Ovary (tissue), 10 donors: ENCODE measurements at regions of chr20 and their contacts with region 1.

Region 1: DNA sequence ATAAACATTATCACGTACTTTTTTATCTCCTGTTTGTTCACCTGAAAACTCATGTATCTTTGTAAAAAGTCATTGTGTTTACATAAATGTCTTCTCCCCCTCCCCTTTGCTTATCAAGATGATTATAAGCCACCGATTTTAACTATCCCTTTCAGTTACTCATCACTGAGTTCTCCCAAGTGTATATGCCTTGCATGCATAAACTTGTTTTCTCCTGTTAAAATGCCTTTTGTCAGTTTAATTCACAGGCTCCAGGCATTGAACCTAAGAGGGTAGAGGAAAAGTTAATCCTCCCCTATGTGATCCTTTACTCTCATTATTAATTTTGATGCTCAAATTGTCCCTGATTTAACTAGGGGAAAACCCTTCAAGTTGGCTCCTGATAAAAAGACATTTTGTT is 24.2 kb downstream of the ANKEF1 start:
- DNase-seq: no peak
- H3K4me3 ChIP-seq: no peak overlapping the region
- H3K27ac ChIP-seq: no peak overlapping the region
- H3K4me1 ChIP-seq: no peaks in the 10 kb centered on the region
- H3K27me3 ChIP-seq: no peaks in the 10 kb centered on the region
- CTCF ChIP-seq: no peak
- EP300 ChIP-seq: no peak
- POLR2A ChIP-seq: no peak

Region 2: DNA sequence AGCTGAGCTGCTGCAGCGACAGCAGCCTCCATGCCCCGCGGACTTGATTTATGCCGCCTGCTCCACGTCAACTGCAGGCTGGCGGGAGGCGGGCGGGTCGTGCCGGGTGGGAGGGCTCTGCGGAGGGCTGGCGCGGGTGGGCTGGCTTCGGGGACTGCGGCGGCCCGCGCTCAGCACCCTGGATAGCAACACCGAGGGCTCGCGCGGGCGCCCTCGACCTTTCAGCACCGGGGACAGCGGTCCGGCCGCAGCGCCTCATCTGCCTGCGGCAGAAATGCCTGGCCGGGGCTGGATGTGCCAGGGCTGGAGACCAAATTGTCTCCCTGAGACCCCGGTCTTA is 160.4 kb after region 1 on chr20:
- intact Hi-C with region 1: no loop called
- DNase-seq: peak; percentile 81 to 93 (median 90)
- H3K4me3 ChIP-seq: peak overlapping the region; percentile 44
- H3K27ac ChIP-seq: peak overlapping the region; percentile 90 to 96
- H3K4me1 ChIP-seq: peaks cover 2% of the 10 kb centered on the region
- H3K27me3 ChIP-seq: no peaks in the 10 kb centered on the region
- CTCF ChIP-seq: no peak
- EP300 ChIP-seq: no peak
- POLR2A ChIP-seq: peak; percentile 33

Region 3: GRCh38 chr20:10883166-10883565 is 824.2 kb after region 1 on chr20:
- intact Hi-C with region 1: loop called in 1 of 4 experiments (anchors 10 kb)
- DNase-seq: no peak
- H3K4me3 ChIP-seq: no peak overlapping the region
- H3K27ac ChIP-seq: no peak overlapping the region
- H3K4me1 ChIP-seq: peaks cover 3% of the 10 kb centered on the region
- H3K27me3 ChIP-seq: no peaks in the 10 kb centered on the region
- CTCF ChIP-seq: no peak
- EP300 ChIP-seq: no peak
- POLR2A ChIP-seq: no peak